Mammary epithelial cell (primary cell): ENCODE measurements at regions of chr14 and their contacts with region 1.

Region 1: DNA sequence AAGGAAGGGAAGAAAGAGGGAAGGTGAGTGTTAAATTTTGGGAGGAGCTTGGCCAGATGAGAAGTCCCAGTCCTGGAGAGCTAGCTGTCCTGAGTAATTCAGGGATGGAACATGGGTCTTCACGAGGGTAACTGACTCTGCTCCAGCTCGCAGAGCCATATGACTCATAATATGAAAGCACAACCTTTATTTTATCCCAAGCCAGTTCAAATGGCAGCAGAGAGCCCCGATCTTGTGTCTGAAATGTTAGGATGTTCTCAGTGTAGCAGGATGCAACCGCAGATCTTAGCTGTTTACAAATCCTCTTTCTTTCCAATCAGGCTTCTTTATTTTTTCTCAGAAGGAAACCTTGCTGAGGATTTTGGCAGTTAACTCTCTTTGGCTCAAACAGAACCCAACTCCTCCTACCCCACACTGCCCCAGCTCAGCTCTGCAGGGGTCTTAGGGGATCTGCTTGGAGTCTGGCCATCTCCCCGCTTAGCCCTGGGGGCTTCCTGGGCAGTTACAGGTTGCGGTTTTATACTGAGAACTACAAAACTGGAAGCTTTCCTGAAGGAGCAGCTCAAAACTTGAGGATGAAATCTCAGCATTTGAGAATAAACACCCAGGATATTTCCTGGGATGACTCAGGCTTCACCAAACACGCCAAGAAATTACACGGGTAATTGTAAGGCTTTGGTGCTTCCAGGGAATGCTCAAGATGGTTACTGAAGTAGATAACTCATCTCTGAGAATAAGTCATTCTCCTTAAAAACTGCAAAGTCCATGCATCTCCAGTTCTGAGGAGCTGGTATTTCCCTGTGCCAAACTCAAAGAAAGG is 92.5 kb downstream of the VCPKMT start:
- DNase-seq: peak; percentile 87
- H3K4me3 ChIP-seq: no peak overlapping the region
- H3K27ac ChIP-seq: peak overlapping the region; percentile 90
- H3K4me1 ChIP-seq: peaks cover 15% of the 10 kb centered on the region
- H3K27me3 ChIP-seq: no peaks in the 10 kb centered on the region
- CTCF ChIP-seq: no peak

Region 2: DNA sequence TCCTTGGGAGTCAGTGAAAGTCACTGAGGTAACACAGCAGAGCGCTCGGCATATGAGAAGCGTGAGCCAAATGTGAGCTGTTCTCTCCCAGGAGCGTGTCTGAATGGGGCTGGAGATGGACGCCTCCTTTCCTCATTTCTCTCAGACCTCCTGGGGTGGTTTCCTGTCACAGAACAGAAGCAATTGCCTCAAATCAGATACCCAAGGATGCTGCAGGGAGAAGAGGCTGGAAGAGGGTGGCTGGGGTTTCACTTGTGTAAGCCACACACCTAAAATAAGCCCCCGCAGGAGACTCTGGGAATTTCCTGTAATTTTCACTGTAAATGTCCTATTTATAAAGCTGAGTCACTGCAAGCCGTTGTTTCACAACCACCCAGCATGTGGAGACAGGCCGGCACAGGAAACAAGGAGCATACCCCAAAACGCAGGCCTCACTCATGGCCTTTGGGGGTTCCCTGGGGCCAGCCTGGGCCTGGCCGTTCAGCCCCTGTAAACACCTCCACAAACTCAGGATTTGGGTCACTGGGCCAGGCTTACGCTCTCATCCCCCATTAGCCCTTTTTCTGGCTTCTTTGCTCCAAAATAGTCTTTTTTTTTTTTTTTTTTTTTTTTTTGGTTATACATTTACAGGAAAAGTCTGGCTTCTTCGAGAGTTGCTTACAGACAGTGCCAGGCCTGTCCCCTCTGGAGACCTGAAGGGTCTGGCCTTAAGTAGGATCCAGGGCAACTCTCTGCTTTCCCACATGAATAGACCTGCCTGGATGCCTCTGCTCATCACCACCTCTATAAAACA is 37.2 kb after region 1 on chr14:
- CTCF ChIA-PET with region 1: no interaction called
- dilution Hi-C with region 1: no loop called
- in situ Hi-C with region 1: no loop called
- intact Hi-C with region 1: loop called (anchors 1 kb)
- DNase-seq: peak; percentile 99
- H3K4me3 ChIP-seq: no peak overlapping the region
- H3K27ac ChIP-seq: peak overlapping the region; percentile 84
- H3K4me1 ChIP-seq: peaks cover 34% of the 10 kb centered on the region
- H3K27me3 ChIP-seq: no peaks in the 10 kb centered on the region
- CTCF ChIP-seq: peak in 1 of 2 donors; percentile 20